ENCODE measurements at regions of chr2 and their contacts with region 1.

Region 1: DNA sequence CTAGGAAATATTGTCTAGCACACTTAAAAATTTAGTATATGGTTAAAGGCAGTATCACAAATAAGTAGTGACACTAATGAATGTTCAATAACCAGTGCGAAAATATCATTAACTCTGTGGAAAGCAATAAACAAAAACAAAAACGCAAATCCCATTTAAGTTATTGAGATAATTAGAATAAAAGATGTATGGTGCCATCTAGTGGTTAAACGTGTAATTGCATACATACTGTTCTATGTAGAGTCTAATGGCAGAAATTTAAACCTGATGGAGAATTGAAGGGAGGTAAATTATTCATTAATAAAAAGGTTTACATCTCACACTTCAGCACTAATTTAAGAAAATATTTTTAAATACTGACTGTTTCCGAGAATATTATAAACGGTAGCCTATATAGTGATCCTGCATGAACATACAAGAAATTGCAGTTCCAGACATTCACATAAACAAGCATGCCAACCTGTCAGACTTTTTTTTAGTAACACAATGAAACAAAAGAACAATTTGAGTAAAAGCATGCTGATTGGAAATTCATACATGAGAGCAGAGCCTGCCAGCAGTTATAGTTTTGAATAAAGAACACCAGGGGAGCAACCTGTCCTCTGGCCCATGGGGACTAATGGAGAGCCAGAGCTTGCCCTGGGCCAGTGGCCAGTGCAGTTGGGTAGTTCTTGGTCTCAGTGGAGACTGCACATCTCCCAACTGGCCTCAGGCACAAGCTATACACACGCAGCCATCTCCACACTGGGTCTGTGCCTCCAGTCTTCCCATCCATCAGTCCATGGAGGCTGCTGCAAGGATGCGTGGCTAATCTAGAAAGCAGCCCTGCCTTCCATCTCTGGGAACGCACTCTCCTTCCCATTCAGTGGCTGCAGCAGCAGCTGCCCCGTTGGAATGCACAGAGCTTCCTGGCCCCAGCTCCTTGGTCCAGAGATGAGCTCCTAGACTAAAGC is 28.0 kb downstream of the GCG start:
- DNase-seq: no peak

Region 2: DNA sequence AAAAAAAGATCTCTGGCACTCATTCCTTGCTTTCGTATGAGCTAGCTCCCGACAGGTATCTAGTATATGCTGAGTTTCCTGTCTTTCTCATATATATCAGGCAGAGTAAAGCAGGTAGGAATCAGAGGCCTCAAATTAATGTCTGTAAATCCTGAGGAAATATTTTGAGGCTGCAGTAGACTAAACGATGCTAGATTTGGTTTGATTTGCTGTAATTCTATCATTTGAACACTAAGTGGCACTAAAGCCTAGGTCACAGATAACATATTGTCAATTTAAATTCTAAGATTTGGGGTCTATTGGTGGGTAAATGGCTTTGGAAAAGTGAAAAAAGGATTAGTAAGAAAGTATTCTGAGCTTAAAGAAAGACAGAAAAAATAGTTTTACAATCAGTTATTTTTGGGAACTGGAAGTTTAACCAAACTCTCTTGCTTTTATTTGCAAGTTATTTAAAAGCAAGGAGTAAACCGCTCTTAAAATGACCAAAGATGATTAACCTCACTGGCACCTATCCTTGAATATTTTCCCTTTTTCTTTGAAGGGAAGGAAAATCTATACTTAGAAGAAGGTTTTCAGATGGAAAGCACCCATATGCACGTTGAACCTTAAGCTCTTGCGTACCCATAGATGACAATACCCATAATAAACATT is 537.4 kb before region 1 on chr2:
- intact Hi-C with region 1: loop called (anchors 10 kb)
- DNase-seq: peak in 1 of 42 donors; percentile 3

Region 3: DNA sequence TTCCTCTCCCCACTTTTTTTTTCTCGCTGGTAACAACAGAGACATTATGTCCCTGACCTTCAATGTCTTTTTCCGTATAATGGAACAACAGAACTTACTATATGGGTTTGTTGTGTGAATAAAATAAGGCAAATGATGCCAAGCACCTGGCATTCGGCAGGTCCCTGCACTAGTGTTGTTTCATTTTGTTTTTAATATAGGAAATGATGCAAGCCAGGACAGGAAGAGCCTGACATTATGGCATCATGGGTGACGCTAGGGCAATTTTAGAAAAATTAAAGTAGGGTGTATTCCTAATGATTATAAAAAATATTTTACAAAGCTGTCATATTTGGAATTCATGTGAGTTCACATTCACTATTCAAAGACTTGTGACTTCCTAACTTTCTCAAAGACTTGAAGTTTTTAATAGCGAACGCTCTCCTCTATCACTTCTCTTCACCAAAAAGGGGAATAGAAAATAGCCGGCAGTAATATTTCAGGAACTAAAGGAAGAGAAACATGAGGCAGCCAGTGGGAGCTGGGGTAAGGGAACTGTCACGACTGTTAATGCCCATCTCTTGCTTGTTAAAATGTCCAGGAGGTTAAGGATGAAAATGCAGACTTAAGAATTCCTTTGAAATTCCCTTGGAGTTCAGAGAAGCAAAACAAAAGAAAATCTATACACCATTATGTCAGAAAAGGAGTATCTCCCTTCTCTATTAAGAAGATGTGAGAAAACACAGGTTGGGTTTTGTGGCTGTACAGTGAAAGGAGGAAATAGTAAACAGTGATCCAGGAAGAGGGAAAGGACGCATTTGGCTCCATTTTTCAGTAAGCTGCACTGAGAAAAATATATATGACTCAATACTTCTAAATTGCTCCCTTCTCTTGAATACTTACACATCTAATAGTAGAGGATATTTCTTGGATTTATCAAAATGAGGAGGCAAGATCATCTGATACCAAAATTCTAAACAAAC is 110.3 kb before region 1 on chr2:
- intact Hi-C with region 1: loop called (anchors 5 kb)
- DNase-seq: no peak

Measured in head of caudate nucleus (tissue), 42 donors.